Naive thymus-derived CD8-positive, alpha-beta T cell (primary cell): ENCODE measurements at regions of chr1 and their contacts with region 1.

Region 1: GRCh38 chr1:207070811-207071210 is 17.7 kb downstream of the PFKFB2 start:
- DNase-seq: peak in 2 of 10 donors; percentile 15 to 27
- ATAC-seq: peak; percentile 37 to 42
- H3K4me3 Mint-ChIP-seq: peak overlapping the region; percentile 48 to 79 (median 64)
- H3K27ac Mint-ChIP-seq: peak overlapping the region; percentile 72 to 95 (median 90)
- H3K4me1 Mint-ChIP-seq: peaks cover 20 to 46% (median 42%) of the 10 kb centered on the region in 4 donors
- H3K27me3 Mint-ChIP-seq: no peaks in the 10 kb centered on the region

Region 2: DNA sequence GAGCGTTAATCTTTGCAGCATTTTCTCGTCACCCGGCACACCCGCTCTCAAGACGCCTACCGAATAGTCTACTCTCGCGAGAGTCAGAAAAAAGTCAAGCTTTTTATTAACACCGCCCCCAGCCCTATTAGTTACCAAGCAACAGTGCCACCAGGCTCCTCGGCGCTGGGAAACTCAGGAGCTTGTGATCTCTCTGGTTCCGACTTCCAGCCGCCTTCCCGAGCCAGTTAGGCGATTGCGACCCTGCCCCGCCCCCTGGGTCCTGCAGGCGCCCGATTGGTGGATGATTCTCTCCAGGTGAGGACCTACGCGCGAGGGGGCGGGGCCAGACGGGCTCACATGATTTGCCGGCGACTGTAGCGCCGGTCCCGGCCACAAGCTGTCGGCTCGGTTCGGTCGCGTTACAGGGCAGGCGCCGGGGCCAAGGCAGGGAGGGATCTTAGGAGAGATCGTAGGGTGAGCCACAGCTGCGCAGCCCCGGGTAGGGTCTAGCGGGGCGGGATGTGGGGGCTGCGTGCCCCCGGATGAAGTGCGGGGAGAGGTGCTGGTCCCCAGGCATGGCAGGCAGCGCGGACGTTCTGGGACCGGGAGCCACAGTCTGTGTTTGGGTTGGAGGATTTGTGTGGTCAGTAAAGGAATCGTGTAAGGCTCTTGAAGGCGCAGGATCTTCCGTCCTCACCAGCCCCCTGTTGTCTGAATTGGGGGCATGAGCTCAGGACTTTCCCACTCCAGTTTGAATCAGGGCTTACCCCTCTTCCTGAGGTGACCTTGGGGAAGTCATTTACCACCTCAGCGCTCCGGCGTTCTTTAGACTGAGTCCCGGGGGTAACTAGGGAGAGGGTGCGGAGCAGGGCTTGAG is 17.7 kb before region 1 on chr1 and contains the start of gene PFKFB2:
- POLR2A ChIA-PET with region 1: interaction called, 14 read pairs
- DNase-seq: peak; percentile 90 to 97 (median 94)
- ATAC-seq: peak; percentile 88 to 90
- H3K4me3 Mint-ChIP-seq: peak within 1 kb of the TSS; percentile 91 to 100 (median 98)
- H3K27ac Mint-ChIP-seq: peak within 1 kb of the TSS; percentile 86 to 100 (median 98)
- H3K4me1 Mint-ChIP-seq: peaks cover 20 to 58% (median 51%) of the 10 kb centered on the region in 4 donors
- H3K27me3 Mint-ChIP-seq: no peaks in the 10 kb centered on the region
- polyA plus RNA-seq, gene PFKFB2: 1.0 to 1.3 (median 1.1) TPM